ENCODE measurements at regions of chr17 and their contacts with region 1.

Region 1: GRCh38 chr17:12027658-12028057 is 7.0 kb downstream of the MAP2K4 start:
- DNase-seq: no peak
- H3K4me3 Mint-ChIP-seq: no peak overlapping the region
- H3K27ac Mint-ChIP-seq: no peak overlapping the region
- H3K4me1 Mint-ChIP-seq: peaks cover 74% of the 10 kb centered on the region
- H3K27me3 Mint-ChIP-seq: no peaks in the 10 kb centered on the region

Region 2: DNA sequence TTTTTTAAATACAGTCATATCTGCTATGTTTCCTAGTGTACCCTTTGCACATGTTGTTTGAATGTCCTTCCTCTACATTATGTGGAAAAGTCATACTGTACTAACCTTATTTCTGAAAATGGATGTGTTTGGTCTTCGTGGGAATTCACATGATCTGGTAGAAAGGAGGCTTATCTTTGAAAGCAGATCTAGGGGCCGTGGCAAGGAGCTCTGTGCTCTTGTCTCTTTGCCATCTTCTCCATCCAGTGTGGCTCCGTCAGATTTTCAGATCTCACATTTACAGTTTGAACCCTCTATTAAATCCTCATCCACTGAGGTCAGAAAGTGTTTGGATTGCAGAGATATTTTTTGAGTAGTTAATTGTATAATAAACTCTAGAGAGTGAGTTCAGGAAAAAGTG is 25.9 kb after region 1 on chr17:
- CTCF ChIA-PET with region 1: interaction called, 3 read pairs
- intact Hi-C with region 1: loop called (anchors 2 kb)
- DNase-seq: no peak
- H3K4me3 Mint-ChIP-seq: peak overlapping the region; percentile 45
- H3K27ac Mint-ChIP-seq: no peak overlapping the region
- H3K4me1 Mint-ChIP-seq: peaks cover 70% of the 10 kb centered on the region
- H3K27me3 Mint-ChIP-seq: no peaks in the 10 kb centered on the region

Region 3: DNA sequence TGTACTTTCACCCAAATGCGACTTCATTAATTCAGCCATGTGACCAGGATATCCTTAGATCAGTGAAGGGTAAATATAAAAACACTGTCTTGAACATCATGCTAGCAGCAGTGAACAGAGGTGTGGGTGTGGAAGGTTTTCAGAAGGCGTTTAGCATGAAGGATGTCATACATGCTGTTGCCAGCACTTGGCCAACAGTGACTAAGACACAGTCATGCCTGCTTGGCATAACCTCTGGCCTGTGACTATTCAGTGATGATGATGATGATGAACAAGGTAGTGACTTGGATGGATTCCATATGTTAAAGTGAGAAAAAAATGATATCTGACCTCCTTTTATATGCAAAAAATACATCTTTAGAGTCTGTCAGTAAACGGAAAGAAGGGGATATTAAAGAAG is 91.0 kb after region 1 on chr17:
- CTCF ChIA-PET with region 1: no interaction called
- intact Hi-C with region 1: no loop called
- DNase-seq: no peak
- H3K4me3 Mint-ChIP-seq: no peak overlapping the region
- H3K27ac Mint-ChIP-seq: no peak overlapping the region
- H3K4me1 Mint-ChIP-seq: no peaks in the 10 kb centered on the region
- H3K27me3 Mint-ChIP-seq: no peaks in the 10 kb centered on the region

Measured in activated naive CD4-positive, alpha-beta T cell treated with anti-CD3 and anti-CD28 coated beads for 36 hours (primary cell).